OCI-LY7 (cell line): ENCODE measurements at regions of chr1 and their contacts with region 1.

Region 1: DNA sequence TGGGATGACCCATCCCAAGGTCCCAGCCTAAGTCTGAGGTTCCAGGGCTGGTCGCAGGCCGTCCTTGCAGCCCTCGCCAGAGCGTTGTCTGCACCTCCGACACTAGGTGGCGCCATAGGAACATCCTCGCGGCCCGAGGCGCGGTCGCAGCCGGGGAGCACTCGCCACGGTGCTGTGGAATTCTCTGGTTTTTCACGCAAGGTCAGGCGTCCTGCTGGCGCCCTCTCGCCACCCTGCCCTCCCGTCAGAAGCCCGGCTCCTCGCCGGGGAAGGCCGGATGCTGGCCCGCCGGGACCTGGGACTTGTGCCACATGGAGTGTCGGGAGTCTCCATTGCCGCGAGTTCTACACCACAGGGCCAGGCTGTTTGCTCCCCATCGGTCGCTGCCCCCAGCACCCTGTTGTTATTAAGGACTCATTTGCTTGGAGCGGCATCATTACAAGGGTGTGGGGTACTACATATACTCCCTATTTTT is 196.8 kb upstream of the LMO4 start:
- DNase-seq: peak; percentile 83
- H3K4me3 ChIP-seq: peak overlapping the region; percentile 64
- H3K27ac ChIP-seq: no peak overlapping the region
- H3K4me1 ChIP-seq: peaks cover 5% of the 10 kb centered on the region
- CTCF ChIP-seq: peak; percentile 93

Region 2: DNA sequence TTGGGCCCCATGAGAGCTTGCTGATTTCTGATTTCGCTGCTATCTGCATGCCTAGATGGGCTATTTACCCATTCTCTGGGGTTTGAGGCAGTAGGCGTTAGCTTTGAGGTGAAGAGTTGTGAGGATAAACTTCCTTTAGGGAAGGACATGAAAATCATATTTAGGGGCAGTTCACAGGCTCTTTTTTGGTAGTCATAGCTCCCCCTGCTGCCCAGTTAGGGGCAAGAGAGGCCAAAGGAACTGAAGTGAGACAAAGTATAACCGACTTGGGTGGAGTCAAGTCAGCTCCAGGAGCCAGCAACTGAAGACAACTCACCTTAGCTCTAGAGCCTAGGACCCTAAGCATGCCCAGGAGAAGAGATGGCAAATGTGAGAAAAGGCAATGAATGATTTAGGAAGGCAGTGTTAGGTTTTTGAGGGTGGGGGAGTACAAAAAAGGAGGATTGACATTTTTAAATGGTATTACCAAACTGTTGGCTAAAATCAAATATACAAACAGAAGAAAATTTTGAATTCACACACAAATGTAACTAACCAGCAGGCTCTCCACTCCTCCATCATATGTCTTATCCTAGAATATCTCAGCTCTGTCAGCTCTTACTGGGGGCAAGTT is 822.0 kb after region 1 on chr1:
- CTCF ChIA-PET with region 1: no interaction called
- POLR2A ChIA-PET with region 1: no interaction called
- intact Hi-C with region 1: loop called (anchors 2 kb)
- DNase-seq: peak; percentile 57
- H3K4me3 ChIP-seq: no peak overlapping the region
- H3K27ac ChIP-seq: no peak overlapping the region
- H3K4me1 ChIP-seq: no peaks in the 10 kb centered on the region
- CTCF ChIP-seq: peak; percentile 90